CD4-positive, alpha-beta memory T cell (primary cell): ENCODE measurements at regions of chr1 and their contacts with region 1.

Region 1: DNA sequence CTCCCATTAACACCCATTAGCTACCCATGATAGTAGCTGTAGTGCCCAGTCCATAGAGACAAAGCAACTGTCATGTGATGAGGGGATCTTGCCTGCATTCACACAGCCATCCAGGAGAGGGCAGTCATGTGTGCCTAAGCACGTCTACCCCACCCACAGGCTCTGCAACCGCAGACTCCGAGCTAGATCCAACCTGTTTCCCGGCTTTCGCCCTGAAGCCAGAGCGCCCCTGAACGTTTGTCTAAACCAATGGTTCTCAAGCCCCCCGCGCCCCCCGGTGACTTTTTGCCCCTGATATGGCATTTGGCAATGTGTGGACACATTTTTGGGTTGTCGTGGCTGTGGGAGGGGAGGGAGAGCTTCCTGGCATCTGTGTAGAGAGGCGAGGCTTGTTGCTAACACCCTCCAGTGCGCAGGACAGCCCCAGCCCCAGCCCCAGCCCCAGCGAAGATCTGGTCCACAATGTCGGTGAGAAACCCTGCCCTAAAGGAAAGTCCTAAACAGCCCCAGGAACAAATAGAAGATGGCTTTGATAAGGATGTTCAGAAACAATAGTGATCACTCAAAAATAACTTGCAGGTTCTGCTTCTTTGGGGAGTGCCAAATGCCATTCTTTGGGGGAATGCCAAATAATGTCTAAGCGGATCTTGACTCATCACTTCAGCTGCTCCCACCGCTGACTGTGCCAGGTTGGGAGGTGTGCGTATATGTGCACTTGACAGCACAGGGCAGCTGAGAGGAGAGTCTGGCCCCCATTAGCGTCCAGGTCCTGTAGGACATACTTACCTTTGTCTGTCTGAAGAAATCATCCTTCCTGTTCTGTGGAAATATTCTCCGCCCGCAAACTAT is 34.5 kb downstream of the SLC44A3 start:
- DNase-seq: peak; percentile 71 to 80 (median 78)
- H3K4me3 ChIP-seq: peak overlapping the region in 1 of 2 donors; percentile 35
- H3K4me3 Mint-ChIP-seq: no peak overlapping the region
- H3K27ac ChIP-seq: no peak overlapping the region
- H3K27ac Mint-ChIP-seq: no peak overlapping the region
- H3K4me1 ChIP-seq: no peaks in the 10 kb centered on the region
- H3K4me1 Mint-ChIP-seq: no peaks in the 10 kb centered on the region
- H3K27me3 ChIP-seq: no peaks in the 10 kb centered on the region
- H3K27me3 Mint-ChIP-seq: peaks cover 2 to 3% of the 10 kb centered on the region in 2 donors

Region 2: GRCh38 chr1:94836891-94837290 is 17.8 kb before region 1 on chr1:
- CTCF ChIA-PET with region 1: interaction called, 16 read pairs
- POLR2A ChIA-PET with region 1: no interaction called
- intact Hi-C with region 1: no loop called
- DNase-seq: no peak
- H3K4me3 ChIP-seq: no peak overlapping the region
- H3K4me3 Mint-ChIP-seq: no peak overlapping the region
- H3K27ac ChIP-seq: no peak overlapping the region
- H3K27ac Mint-ChIP-seq: no peak overlapping the region
- H3K4me1 ChIP-seq: no peaks in the 10 kb centered on the region
- H3K4me1 Mint-ChIP-seq: no peaks in the 10 kb centered on the region
- H3K27me3 ChIP-seq: no peaks in the 10 kb centered on the region
- H3K27me3 Mint-ChIP-seq: peaks cover 4 to 10% of the 10 kb centered on the region in 2 donors

Region 3: GRCh38 chr1:94926915-94927404 is 72.3 kb after region 1 on chr1 and contains the start of gene CNN3:
- CTCF ChIA-PET with region 1: interaction called, 4 read pairs
- POLR2A ChIA-PET with region 1: no interaction called
- intact Hi-C with region 1: loop called (anchors 1 kb)
- DNase-seq: peak; percentile 36 to 61 (median 47)
- H3K4me3 ChIP-seq: peak within 1 kb of the TSS in 1 of 2 donors; percentile 35
- H3K4me3 Mint-ChIP-seq: peak within 1 kb of the TSS; percentile 84 to 92 (median 90)
- H3K27ac ChIP-seq: no peak within 1 kb of the TSS
- H3K27ac Mint-ChIP-seq: peak within 1 kb of the TSS in 6 of 7 donors; percentile 5 to 71 (median 60)
- H3K4me1 ChIP-seq: peaks cover 7% of the 10 kb centered on the region
- H3K4me1 Mint-ChIP-seq: peaks cover 9 to 24% (median 17%) of the 10 kb centered on the region in 4 donors
- H3K27me3 ChIP-seq: peaks cover 17% of the 10 kb centered on the region
- H3K27me3 Mint-ChIP-seq: peaks cover 27 to 34% of the 10 kb centered on the region in 2 donors
- total RNA-seq, gene CNN3: 2.6 to 3.2 TPM

Region 4: GRCh38 chr1:95043141-95043980 is 188.7 kb after region 1 on chr1:
- CTCF ChIA-PET with region 1: interaction called, 226 read pairs
- POLR2A ChIA-PET with region 1: interaction called, 8 read pairs
- intact Hi-C with region 1: no loop called
- DNase-seq: peak; percentile 68 to 73 (median 72)
- H3K4me3 ChIP-seq: no peak overlapping the region
- H3K4me3 Mint-ChIP-seq: no peak overlapping the region
- H3K27ac ChIP-seq: no peak overlapping the region
- H3K27ac Mint-ChIP-seq: no peak overlapping the region
- H3K4me1 ChIP-seq: no peaks in the 10 kb centered on the region
- H3K4me1 Mint-ChIP-seq: no peaks in the 10 kb centered on the region
- H3K27me3 ChIP-seq: no peaks in the 10 kb centered on the region
- H3K27me3 Mint-ChIP-seq: no peaks in the 10 kb centered on the region

Region 5: GRCh38 chr1:95072532-95073419 is 218.1 kb after region 1 on chr1 and contains the start of gene ALG14:
- CTCF ChIA-PET with region 1: interaction called, 9 read pairs
- POLR2A ChIA-PET with region 1: interaction called, 11 read pairs
- intact Hi-C with region 1: no loop called
- DNase-seq: peak; percentile 94 to 96 (median 95)
- H3K4me3 ChIP-seq: peak within 1 kb of the TSS; percentile 93 to 96
- H3K4me3 Mint-ChIP-seq: peak within 1 kb of the TSS; percentile 96 to 99 (median 98)
- H3K27ac ChIP-seq: peak within 1 kb of the TSS; percentile 83
- H3K27ac Mint-ChIP-seq: peak within 1 kb of the TSS; percentile 96 to 99 (median 98)
- H3K4me1 ChIP-seq: peaks cover 14% of the 10 kb centered on the region
- H3K4me1 Mint-ChIP-seq: peaks cover 12 to 21% (median 18%) of the 10 kb centered on the region in 4 donors
- H3K27me3 ChIP-seq: no peaks in the 10 kb centered on the region
- H3K27me3 Mint-ChIP-seq: peaks cover 2 to 5% of the 10 kb centered on the region in 2 donors
- total RNA-seq, gene ALG14: 1.1 to 3.2 TPM

Region 6: GRCh38 chr1:95233737-95234500 is 379.2 kb after region 1 on chr1 and contains the start of gene RWDD3:
- CTCF ChIA-PET with region 1: interaction called, 38 read pairs
- POLR2A ChIA-PET with region 1: interaction called, 10 read pairs
- intact Hi-C with region 1: loop called (anchors 1 kb)
- DNase-seq: peak; percentile 91 to 96 (median 93)
- H3K4me3 ChIP-seq: peak within 1 kb of the TSS; percentile 58 to 81
- H3K4me3 Mint-ChIP-seq: peak within 1 kb of the TSS; percentile 89 to 95 (median 90)
- H3K27ac ChIP-seq: peak within 1 kb of the TSS; percentile 69
- H3K27ac Mint-ChIP-seq: peak within 1 kb of the TSS; percentile 86 to 94 (median 91)
- H3K4me1 ChIP-seq: peaks cover 29% of the 10 kb centered on the region
- H3K4me1 Mint-ChIP-seq: peaks cover 22 to 54% (median 42%) of the 10 kb centered on the region in 4 donors
- H3K27me3 ChIP-seq: no peaks in the 10 kb centered on the region
- H3K27me3 Mint-ChIP-seq: peaks cover 6 to 10% of the 10 kb centered on the region in 2 donors
- total RNA-seq, gene RWDD3: 22.5 to 27.5 TPM